Motor neuron (in vitro differentiated cells): ENCODE measurements at regions of chr5 and their contacts with region 1.

Region 1: DNA sequence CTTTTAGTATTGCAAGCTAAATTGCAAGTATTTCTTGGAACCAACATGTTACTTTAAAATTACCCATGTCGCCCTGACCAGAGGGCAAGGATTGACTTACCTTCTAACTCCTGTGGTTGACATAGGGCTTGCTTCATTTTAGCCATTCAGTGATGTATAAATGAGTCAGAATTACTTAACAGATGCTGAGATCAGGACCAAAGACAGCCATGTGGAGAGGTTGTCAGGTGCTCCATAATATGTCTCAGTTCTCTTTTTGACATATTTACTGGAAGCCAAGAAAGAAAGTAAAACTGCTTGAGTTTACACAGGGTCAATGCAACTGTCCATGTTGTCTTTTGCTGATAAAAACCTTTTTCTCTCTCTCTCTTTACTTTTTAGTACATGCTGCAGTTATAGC is 33.2 kb downstream of the F2RL2 start:
- ATAC-seq: no peak
- H3K4me3 ChIP-seq: no peak overlapping the region
- H3K27ac ChIP-seq: no peak overlapping the region
- H3K4me1 ChIP-seq: peaks cover 0 to 7% of the 10 kb centered on the region in 2 donors

Region 2: DNA sequence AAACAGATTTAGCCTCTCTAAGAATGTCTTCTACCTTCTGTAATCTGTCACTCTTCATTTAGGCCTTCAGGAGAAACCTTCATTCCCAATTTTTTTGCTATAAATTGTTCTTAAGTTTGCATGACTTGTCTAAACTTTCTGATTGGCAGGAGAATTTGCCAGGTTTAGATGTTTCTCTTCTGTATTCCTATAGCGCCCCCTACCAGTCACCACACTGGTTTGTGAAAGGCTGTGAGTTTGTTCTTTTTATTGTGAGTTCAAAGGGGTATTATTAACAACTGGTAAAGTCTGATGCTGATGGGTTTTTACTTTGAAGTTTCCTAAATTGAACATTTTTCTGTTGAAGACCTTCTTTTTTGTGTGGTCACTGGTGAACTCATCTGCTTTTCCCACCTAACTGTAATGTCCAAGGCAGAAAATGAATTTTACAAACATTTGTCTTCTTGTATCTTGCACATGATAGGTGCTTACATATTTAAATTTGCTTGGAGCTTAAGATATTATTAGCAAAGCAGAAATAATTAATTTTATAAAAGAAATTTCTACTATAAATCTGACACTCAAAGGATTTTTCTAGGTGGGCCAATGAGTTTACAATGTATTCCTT is 51.6 kb after region 1 on chr5:
- in situ Hi-C with region 1: loop called in 1 of 9 experiments (anchors 10 kb)
- ATAC-seq: peak in 4 of 8 experiments; percentile 42 to 71 (median 66)
- H3K4me3 ChIP-seq: no peak overlapping the region
- H3K27ac ChIP-seq: no peak overlapping the region
- H3K4me1 ChIP-seq: no peaks in the 10 kb centered on the region